GM13977 (cell line): ENCODE measurements at regions of chr11 and their contacts with region 1.

Region 1: GRCh38 chr11:64894070-64894796 is 15.8 kb upstream of the EHD1 start:
- DNase-seq: peak; percentile 92
- CTCF ChIP-seq: peak; percentile 97

Region 2: GRCh38 chr11:64846998-64847666 is 47.1 kb before region 1 on chr11:
- in situ Hi-C with region 1: loop called (anchors 5 kb)
- DNase-seq: peak; percentile 92
- CTCF ChIP-seq: peak; percentile 97

Region 3: DNA sequence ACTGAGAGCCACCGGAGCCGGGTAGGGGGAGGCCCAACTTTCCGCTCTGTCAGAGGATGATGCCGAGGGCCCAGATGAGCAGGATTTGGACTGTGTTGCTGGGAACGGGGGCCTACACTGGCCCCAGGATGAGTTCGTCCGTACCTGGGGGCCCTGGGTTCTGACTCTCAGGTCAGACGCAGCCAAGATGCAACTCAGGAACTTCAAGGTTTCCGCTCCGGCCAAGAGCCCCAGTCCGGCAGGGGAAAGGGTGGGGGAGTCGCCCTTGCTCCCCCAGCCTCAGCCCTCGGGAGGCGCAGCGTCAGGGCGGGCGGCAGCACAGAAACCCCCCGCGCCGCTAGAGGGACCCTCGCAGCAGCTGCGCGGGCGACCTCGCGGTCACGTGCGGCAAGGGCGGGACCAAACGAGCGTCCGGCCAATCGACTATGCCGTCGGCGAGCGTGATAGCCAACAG is 119.5 kb after region 1 on chr11:
- in situ Hi-C with region 1: no loop called
- DNase-seq: peak; percentile 97
- CTCF ChIP-seq: peak; percentile 81

Region 4: DNA sequence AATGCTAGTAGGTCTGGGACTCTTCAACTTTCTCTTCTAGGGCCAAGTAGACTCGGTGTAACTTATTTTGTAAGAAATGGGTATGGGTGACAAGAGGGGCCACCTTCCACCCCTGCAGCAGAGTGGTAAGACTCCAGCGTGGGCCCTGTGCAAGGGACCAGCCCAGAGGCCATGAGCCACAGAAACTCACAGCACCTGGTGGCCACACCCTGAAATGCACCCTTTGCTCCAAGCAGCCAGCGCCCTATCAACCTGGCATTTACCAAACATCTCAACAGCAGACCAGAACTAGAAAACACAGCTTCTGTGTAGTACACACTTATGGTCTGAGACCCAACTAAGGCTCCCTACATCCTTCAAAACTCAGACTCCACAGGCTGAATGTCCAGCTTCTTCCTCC is 183.9 kb after region 1 on chr11:
- in situ Hi-C with region 1: no loop called
- DNase-seq: peak; percentile 68
- CTCF ChIP-seq: peak; percentile 84